IMR-90 (cell line): ENCODE measurements at regions of chr1 and their contacts with region 1.

Region 1: GRCh38 chr1:93253521-93253920 is 73.0 kb downstream of the CCDC18 start:
- DNase-seq: no peak
- ATAC-seq: no peak
- H3K4me3 ChIP-seq: no peak overlapping the region
- H3K27ac ChIP-seq: no peak overlapping the region
- H3K4me1 ChIP-seq: peaks cover 3% of the 10 kb centered on the region; the same call in 1 of the 2 replicates
- H3K27me3 ChIP-seq: no peaks in the 10 kb centered on the region
- CTCF ChIP-seq: no peak
- POLR2A ChIP-seq: no peak
- RAD21 ChIP-seq: no peak

Region 2: DNA sequence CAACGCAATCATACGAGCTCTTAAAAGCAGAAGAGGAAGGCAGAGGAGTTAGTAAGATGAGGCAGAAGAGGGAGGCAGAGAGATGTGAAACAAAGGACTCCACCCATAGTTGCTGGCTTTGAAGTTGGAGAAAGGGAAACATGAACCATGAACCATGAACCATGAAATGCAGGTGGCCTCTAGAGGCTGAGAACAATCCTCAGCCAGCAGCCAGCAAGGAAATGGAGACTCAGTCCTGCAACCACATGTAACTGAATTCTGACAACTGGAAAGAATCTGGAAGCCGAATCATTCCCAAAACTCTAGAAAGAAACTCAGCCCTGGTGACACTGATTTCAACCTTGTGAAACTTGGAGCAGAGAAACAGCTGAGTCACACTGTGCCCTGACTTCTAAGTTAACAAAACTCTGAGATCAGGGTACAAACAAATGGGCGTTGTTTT is 302.4 kb before region 1 on chr1:
- CTCF ChIA-PET with region 1: no interaction called
- POLR2A ChIA-PET with region 1: no interaction called
- dilution Hi-C with region 1: no loop called
- in situ Hi-C with region 1: no loop called
- intact Hi-C with region 1: no loop called
- DNase-seq: peak; percentile 71
- ATAC-seq: peak; percentile 64
- H3K4me3 ChIP-seq: no peak overlapping the region; the same call in 1 of the 2 replicates
- H3K27ac ChIP-seq: peak overlapping the region; percentile 66
- H3K4me1 ChIP-seq: peaks cover 8% of the 10 kb centered on the region
- H3K27me3 ChIP-seq: no peaks in the 10 kb centered on the region
- CTCF ChIP-seq: no peak
- POLR2A ChIP-seq: no peak
- RAD21 ChIP-seq: no peak

Region 3: GRCh38 chr1:93235271-93235670 is 18.2 kb before region 1 on chr1:
- CTCF ChIA-PET with region 1: no interaction called
- POLR2A ChIA-PET with region 1: no interaction called
- dilution Hi-C with region 1: no loop called
- in situ Hi-C with region 1: no loop called
- intact Hi-C with region 1: loop called (anchors 2 kb)
- DNase-seq: no peak
- ATAC-seq: no peak
- H3K4me3 ChIP-seq: no peak overlapping the region
- H3K27ac ChIP-seq: no peak overlapping the region
- H3K4me1 ChIP-seq: no peaks in the 10 kb centered on the region
- H3K27me3 ChIP-seq: no peaks in the 10 kb centered on the region
- CTCF ChIP-seq: no peak
- POLR2A ChIP-seq: no peak
- RAD21 ChIP-seq: no peak

Region 4: GRCh38 chr1:93625580-93626327 is 372.2 kb after region 1 on chr1:
- CTCF ChIA-PET with region 1: no interaction called
- POLR2A ChIA-PET with region 1: no interaction called
- dilution Hi-C with region 1: no loop called
- in situ Hi-C with region 1: no loop called
- intact Hi-C with region 1: no loop called
- DNase-seq: peak; percentile 93
- ATAC-seq: peak; percentile 35
- H3K4me3 ChIP-seq: no peak overlapping the region
- H3K27ac ChIP-seq: no peak overlapping the region
- H3K4me1 ChIP-seq: peaks cover 24% of the 10 kb centered on the region
- H3K27me3 ChIP-seq: no peaks in the 10 kb centered on the region
- CTCF ChIP-seq: no peak
- POLR2A ChIP-seq: no peak
- RAD21 ChIP-seq: no peak